HepG2 (cell line): ENCODE measurements at regions of chr17 and their contacts with region 1.

Region 1: GRCh38 chr17:57833179-57833939 is 16.5 kb downstream of the MRPS23 start:
- DNase-seq: peak; percentile 72
- ATAC-seq: peak; percentile 92
- H3K4me3 ChIP-seq: peak overlapping the region; percentile 54 to 74 (median 68)
- H3K27ac ChIP-seq: peak overlapping the region; percentile 41
- H3K4me1 ChIP-seq: peaks cover 69% of the 10 kb centered on the region
- H3K27me3 ChIP-seq: no peaks in the 10 kb centered on the region; a peak in 1 of 5 replicates
- CTCF ChIP-seq: peak; percentile 96
- EP300 ChIP-seq: peak in 1 of 2 experiments; percentile 53; a peak in 1 of 4 replicates
- POLR2A ChIP-seq: no peak
- RAD21 ChIP-seq: peak; percentile 73

Region 2: GRCh38 chr17:57597531-57598453 is 235.6 kb before region 1 on chr17:
- CTCF ChIA-PET with region 1: no interaction called
- POLR2A ChIA-PET with region 1: no interaction called
- in situ Hi-C with region 1: no loop called
- intact Hi-C with region 1: loop called (anchors 5 kb)
- DNase-seq: peak; percentile 67
- ATAC-seq: peak; percentile 78
- H3K4me3 ChIP-seq: no peak overlapping the region
- H3K27ac ChIP-seq: peak overlapping the region; percentile 33
- H3K4me1 ChIP-seq: peaks cover 13% of the 10 kb centered on the region
- H3K27me3 ChIP-seq: no peaks in the 10 kb centered on the region
- CTCF ChIP-seq: peak; percentile 88
- EP300 ChIP-seq: no peak
- POLR2A ChIP-seq: no peak
- RAD21 ChIP-seq: peak; percentile 76

Region 3: DNA sequence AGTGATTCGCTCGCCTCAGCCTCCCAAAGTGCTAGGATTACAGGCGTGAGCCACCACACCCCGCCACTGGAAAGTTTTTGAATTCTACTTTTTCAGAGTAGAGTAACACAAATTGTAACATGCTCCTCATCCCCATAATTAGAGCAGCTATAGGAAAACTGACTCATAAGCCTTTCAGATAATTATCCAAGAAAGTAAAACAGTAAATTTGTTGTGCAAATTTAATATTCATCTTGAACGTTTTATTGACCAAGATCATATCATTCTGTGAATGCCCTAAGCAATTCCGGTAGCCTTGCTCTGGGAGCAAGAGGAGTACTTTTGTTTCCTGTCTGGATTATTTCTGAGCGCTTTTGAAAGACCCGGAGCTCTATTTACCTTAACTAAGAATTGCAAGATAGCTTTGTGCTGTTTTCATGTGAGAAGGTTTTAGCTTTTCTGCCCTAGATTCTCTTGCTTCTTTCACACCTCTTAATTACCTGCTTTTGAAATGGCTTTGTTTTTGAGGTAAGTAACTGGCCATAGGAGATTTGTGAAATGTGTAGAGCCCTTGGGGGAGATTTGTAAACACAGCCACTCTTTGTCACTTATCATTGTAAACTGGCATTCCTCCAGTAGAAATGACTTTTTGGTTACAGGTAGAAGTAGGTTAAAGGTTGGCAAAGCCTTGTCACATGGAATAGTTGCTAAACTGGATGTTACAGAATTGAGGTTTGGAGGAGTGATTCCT is 1463.6 kb after region 1 on chr17:
- CTCF ChIA-PET with region 1: no interaction called
- POLR2A ChIA-PET with region 1: no interaction called
- in situ Hi-C with region 1: no loop called
- intact Hi-C with region 1: loop called (anchors 5 kb)
- DNase-seq: peak; percentile 74
- ATAC-seq: peak; percentile 81
- H3K4me3 ChIP-seq: peak overlapping the region in 1 of 3 experiments; percentile 14; a peak in 2 of 6 replicates
- H3K27ac ChIP-seq: peak overlapping the region; percentile 78
- H3K4me1 ChIP-seq: peaks cover 44% of the 10 kb centered on the region
- H3K27me3 ChIP-seq: no peaks in the 10 kb centered on the region
- CTCF ChIP-seq: no peak
- EP300 ChIP-seq: no peak
- POLR2A ChIP-seq: no peak
- RAD21 ChIP-seq: no peak